ENCODE measurements at regions of chr19 and their contacts with region 1.

Region 1: DNA sequence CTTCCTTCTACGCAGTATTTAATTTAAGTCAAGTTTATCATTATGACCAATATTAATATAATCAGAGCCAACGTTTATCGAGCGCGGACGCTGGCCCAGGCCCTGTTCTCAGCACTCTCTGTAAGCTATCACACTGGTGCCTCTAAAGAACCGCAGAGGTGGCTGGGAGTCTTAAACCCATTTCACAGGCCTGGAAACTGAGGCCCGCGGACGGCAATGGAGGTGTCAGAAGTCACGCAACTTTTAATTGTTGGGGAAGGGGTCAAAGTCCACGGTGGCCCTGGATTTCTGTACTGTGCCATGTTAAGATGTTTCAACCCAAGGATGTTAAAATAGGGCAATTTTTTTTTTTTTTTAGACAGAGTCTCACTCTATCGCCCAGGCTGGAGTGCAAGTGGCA is 8.8 kb downstream of the PTPRS start:
- DNase-seq: no peak
- ATAC-seq: no peak
- H3K4me3 Mint-ChIP-seq: no peak overlapping the region
- H3K27ac Mint-ChIP-seq: no peak overlapping the region
- H3K4me1 Mint-ChIP-seq: peaks cover 9 to 17% (median 13%) of the 10 kb centered on the region in 4 donors
- H3K27me3 Mint-ChIP-seq: peaks cover 17 to 78% (median 43%) of the 10 kb centered on the region in 5 donors

Region 2: GRCh38 chr19:5417495-5418436 is 86.0 kb after region 1 on chr19:
- POLR2A ChIA-PET with region 1: interaction called, 10 read pairs
- DNase-seq: no peak
- ATAC-seq: no peak
- H3K4me3 Mint-ChIP-seq: no peak overlapping the region
- H3K27ac Mint-ChIP-seq: no peak overlapping the region
- H3K4me1 Mint-ChIP-seq: no peaks in the 10 kb centered on the region
- H3K27me3 Mint-ChIP-seq: peaks cover 20 to 57% (median 39%) of the 10 kb centered on the region in 5 donors

Region 3: GRCh38 chr19:5557691-5558090 is 225.9 kb after region 1 on chr19:
- POLR2A ChIA-PET with region 1: no interaction called
- DNase-seq: no peak
- ATAC-seq: no peak
- H3K4me3 Mint-ChIP-seq: no peak overlapping the region
- H3K27ac Mint-ChIP-seq: no peak overlapping the region
- H3K4me1 Mint-ChIP-seq: no peaks in the 10 kb centered on the region
- H3K27me3 Mint-ChIP-seq: peaks cover 7 to 56% (median 30%) of the 10 kb centered on the region in 5 donors